ENCODE measurements at regions of chr20 and their contacts with region 1.

Region 1: GRCh38 chr20:49330544-49331239 is 52.8 kb upstream of the ZNFX1 start:
- DNase-seq: no peak
- H3K4me3 ChIP-seq: no peak overlapping the region
- H3K27ac ChIP-seq: no peak overlapping the region
- H3K4me1 ChIP-seq: peaks cover 0 to 11% (median 0%) of the 10 kb centered on the region in 3 donors
- H3K27me3 ChIP-seq: peaks cover 0 to 54% (median 0%) of the 10 kb centered on the region in 4 donors
- CTCF ChIP-seq: no peak
- POLR2A ChIP-seq: no peak

Region 2: GRCh38 chr20:48970551-48971365 is 359.9 kb before region 1 on chr20:
- intact Hi-C with region 1: no loop called
- DNase-seq: no peak
- H3K4me3 ChIP-seq: no peak overlapping the region
- H3K27ac ChIP-seq: no peak overlapping the region
- H3K4me1 ChIP-seq: peaks cover 0 to 2% (median 0%) of the 10 kb centered on the region in 3 donors
- H3K27me3 ChIP-seq: no peaks in the 10 kb centered on the region
- CTCF ChIP-seq: no peak
- POLR2A ChIP-seq: no peak

Region 3: DNA sequence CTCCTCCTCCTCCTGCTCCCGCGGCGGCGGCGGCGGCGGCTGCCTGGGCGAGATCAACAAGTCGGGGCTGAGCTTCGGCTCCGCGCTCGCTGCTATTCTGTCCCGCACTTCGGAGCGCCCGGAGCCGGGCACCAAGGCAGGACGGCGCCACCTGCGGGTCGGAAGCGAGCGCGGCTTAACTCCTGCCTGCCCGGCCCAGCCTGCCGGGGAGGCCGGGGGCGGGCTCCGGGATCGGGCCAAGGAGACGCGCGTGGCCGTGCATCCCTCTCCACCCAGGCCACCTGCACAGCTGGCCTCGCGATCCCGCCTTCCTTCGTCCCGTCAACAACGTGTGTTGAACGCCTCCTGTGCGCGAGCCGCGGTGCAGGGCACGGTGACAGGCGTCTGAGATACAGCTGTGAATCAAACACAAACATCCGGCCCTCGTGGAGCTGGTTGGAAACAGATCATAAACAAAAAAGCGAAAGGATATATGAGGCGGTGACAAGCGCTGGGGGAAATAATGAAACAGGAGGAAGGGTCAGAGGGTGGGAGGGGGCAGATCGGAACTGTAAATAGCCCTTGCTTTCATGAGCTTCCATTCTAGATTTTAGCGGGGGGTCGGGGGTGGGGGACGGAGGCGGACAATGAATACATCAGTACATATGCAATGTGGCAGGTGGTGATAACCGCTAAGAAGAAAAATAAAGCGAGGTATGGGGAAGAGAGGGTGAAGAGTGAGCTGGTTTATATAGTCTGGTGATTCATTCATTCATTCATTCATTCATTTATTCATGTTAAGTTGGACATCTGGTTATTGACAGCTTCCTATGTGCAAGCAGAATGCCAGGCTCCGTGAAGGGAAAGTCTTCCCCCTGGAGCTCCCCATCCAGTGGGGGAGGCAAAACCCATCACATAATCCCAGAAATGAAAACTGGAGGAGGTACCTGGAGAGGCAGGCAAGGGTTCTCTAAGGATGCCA is 153.8 kb after region 1 on chr20:
- intact Hi-C with region 1: loop called (anchors 5 kb)
- DNase-seq: no peak
- H3K4me3 ChIP-seq: peak overlapping the region; percentile 19 to 67 (median 41)
- H3K27ac ChIP-seq: peak overlapping the region in 2 of 4 donors; percentile 79 to 84
- H3K4me1 ChIP-seq: peaks cover 7 to 46% (median 10%) of the 10 kb centered on the region in 3 donors
- H3K27me3 ChIP-seq: peaks cover 0 to 85% (median 5%) of the 10 kb centered on the region in 4 donors
- CTCF ChIP-seq: peak; percentile 63 to 88 (median 78)
- POLR2A ChIP-seq: no peak

Region 4: GRCh38 chr20:49534255-49534712 is 203.6 kb after region 1 on chr20:
- intact Hi-C with region 1: loop called (anchors 5 kb)
- DNase-seq: no peak
- H3K4me3 ChIP-seq: no peak overlapping the region
- H3K27ac ChIP-seq: no peak overlapping the region
- H3K4me1 ChIP-seq: no peaks in the 10 kb centered on the region
- H3K27me3 ChIP-seq: peaks cover 0 to 14% (median 0%) of the 10 kb centered on the region in 4 donors
- CTCF ChIP-seq: peak; percentile 50 to 83 (median 74)
- POLR2A ChIP-seq: no peak